ENCODE measurements at regions of chr3 and their contacts with region 1.

Region 1: GRCh38 chr3:134212906-134213665 is 37.6 kb downstream of the RYK start:
- DNase-seq: peak; percentile 54 to 88 (median 71)
- ATAC-seq: peak; percentile 93
- H3K4me3 ChIP-seq: no peak overlapping the region
- H3K4me3 Mint-ChIP-seq: peak overlapping the region in 1 of 10 donors; percentile 18
- H3K27ac ChIP-seq: no peak overlapping the region
- H3K27ac Mint-ChIP-seq: peak overlapping the region in 5 of 9 donors; percentile 12 to 60 (median 33)
- H3K4me1 ChIP-seq: no peaks in the 10 kb centered on the region
- H3K4me1 Mint-ChIP-seq: peaks cover 7 to 43% (median 30%) of the 10 kb centered on the region in 7 donors
- H3K27me3 ChIP-seq: no peaks in the 10 kb centered on the region
- H3K27me3 Mint-ChIP-seq: no peaks in the 10 kb centered on the region

Region 2: DNA sequence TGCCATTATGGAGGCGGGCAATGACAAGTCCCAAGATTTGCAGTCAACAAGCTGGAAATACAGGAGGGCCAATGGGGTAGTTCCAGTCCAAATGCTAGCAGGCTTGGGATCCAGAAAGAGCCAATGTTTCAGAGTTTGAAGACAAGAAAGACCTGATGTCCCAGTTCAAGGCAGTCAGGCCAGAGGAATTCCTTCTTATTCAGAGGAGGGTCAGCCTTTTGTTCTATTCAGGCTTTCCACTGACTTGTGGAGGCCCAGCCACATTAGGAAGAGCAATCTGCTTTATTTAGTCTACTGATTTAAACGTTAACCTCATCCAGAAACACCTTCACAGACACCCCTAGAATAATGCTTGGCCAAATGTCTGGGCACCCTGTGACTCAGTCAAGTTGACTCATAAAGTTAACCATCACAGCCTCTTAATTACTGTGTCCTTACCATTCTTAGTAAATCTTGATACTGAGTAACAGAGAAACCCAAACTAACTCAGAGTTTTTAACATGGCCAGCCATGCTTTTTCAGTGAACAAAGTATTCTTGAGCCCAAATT is 1439.9 kb before region 1 on chr3:
- CTCF ChIA-PET with region 1: no interaction called
- POLR2A ChIA-PET with region 1: no interaction called
- intact Hi-C with region 1: no loop called
- DNase-seq: no peak
- ATAC-seq: no peak
- H3K4me3 ChIP-seq: no peak overlapping the region
- H3K4me3 Mint-ChIP-seq: no peak overlapping the region
- H3K27ac ChIP-seq: no peak overlapping the region
- H3K27ac Mint-ChIP-seq: no peak overlapping the region
- H3K4me1 ChIP-seq: no peaks in the 10 kb centered on the region
- H3K4me1 Mint-ChIP-seq: no peaks in the 10 kb centered on the region
- H3K27me3 ChIP-seq: no peaks in the 10 kb centered on the region
- H3K27me3 Mint-ChIP-seq: peaks cover 4 to 15% (median 14%) of the 10 kb centered on the region in 5 donors

Region 3: DNA sequence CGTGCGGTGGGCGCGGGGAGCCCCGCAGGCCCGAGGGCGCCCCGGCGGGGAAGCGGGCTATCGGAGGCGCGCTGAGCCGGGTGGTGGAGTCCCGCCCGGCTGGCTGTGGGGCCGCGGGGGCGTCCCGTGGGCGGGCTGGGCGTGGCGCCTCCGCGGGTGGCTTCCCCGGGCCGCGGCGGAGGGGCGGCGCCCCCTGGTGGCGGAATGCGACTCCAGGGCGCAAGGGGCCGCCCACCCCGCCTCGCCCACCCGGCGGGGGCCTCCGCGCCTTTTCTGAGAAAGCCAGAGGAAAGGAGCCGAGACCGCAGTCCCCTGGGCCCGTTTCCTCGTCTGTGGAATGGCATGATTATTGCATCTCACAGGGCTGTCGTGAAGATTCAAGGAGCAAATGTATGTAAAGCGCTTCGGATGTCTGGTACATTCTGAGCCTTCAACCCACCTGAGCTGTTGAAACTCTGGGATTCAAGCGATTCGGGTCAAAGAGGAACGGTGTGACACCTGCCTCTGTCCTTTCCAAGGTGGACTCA is 285.5 kb before region 1 on chr3:
- CTCF ChIA-PET with region 1: no interaction called
- POLR2A ChIA-PET with region 1: no interaction called
- intact Hi-C with region 1: loop called in 1 of 2 experiments (anchors 5 kb)
- DNase-seq: peak; percentile 64 to 88 (median 81)
- ATAC-seq: peak; percentile 97
- H3K4me3 ChIP-seq: peak overlapping the region; percentile 51
- H3K4me3 Mint-ChIP-seq: peak overlapping the region; percentile 58 to 85 (median 74)
- H3K27ac ChIP-seq: peak overlapping the region; percentile 43
- H3K27ac Mint-ChIP-seq: peak overlapping the region in 2 of 9 donors; percentile 56 to 69
- H3K4me1 ChIP-seq: peaks cover 0 to 4% of the 10 kb centered on the region in 2 donors
- H3K4me1 Mint-ChIP-seq: peaks cover 4 to 14% (median 5%) of the 10 kb centered on the region in 7 donors
- H3K27me3 ChIP-seq: peaks cover 0 to 3% of the 10 kb centered on the region in 2 donors
- H3K27me3 Mint-ChIP-seq: peaks cover 5 to 26% (median 10%) of the 10 kb centered on the region in 5 donors

Region 4: GRCh38 chr3:134161898-134162615 is 51.0 kb before region 1 on chr3:
- CTCF ChIA-PET with region 1: no interaction called
- POLR2A ChIA-PET with region 1: no interaction called
- intact Hi-C with region 1: no loop called
- DNase-seq: no peak
- ATAC-seq: no peak
- H3K4me3 ChIP-seq: no peak overlapping the region
- H3K4me3 Mint-ChIP-seq: no peak overlapping the region
- H3K27ac ChIP-seq: no peak overlapping the region
- H3K27ac Mint-ChIP-seq: peak overlapping the region in 1 of 9 donors; percentile 50
- H3K4me1 ChIP-seq: no peaks in the 10 kb centered on the region
- H3K4me1 Mint-ChIP-seq: peaks cover 0 to 4% (median 0%) of the 10 kb centered on the region in 7 donors
- H3K27me3 ChIP-seq: no peaks in the 10 kb centered on the region
- H3K27me3 Mint-ChIP-seq: no peaks in the 10 kb centered on the region

Region 5: GRCh38 chr3:134299185-134299887 is 86.2 kb after region 1 on chr3:
- CTCF ChIA-PET with region 1: interaction called, 7 read pairs
- POLR2A ChIA-PET with region 1: no interaction called
- intact Hi-C with region 1: loop called (anchors 1 kb)
- DNase-seq: peak in 1 of 9 donors; percentile 12
- ATAC-seq: no peak
- H3K4me3 ChIP-seq: no peak overlapping the region
- H3K4me3 Mint-ChIP-seq: no peak overlapping the region
- H3K27ac ChIP-seq: no peak overlapping the region
- H3K27ac Mint-ChIP-seq: peak overlapping the region in 1 of 9 donors; percentile 14
- H3K4me1 ChIP-seq: peaks cover 8 to 9% of the 10 kb centered on the region in 2 donors
- H3K4me1 Mint-ChIP-seq: peaks cover 0 to 3% (median 0%) of the 10 kb centered on the region in 7 donors
- H3K27me3 ChIP-seq: no peaks in the 10 kb centered on the region
- H3K27me3 Mint-ChIP-seq: peaks cover 2 to 55% (median 14%) of the 10 kb centered on the region in 5 donors

Region 6: GRCh38 chr3:134373994-134374790 is 161.1 kb after region 1 on chr3 and contains the start of gene AMOTL2:
- CTCF ChIA-PET with region 1: interaction called, 8 read pairs
- POLR2A ChIA-PET with region 1: no interaction called
- intact Hi-C with region 1: loop called (anchors 1 kb)
- DNase-seq: peak in 1 of 9 donors; percentile 23
- ATAC-seq: peak; percentile 39
- H3K4me3 ChIP-seq: peak within 1 kb of the TSS; percentile 41
- H3K4me3 Mint-ChIP-seq: peak within 1 kb of the TSS; percentile 78 to 90 (median 84)
- H3K27ac ChIP-seq: no peak within 1 kb of the TSS
- H3K27ac Mint-ChIP-seq: no peak within 1 kb of the TSS
- H3K4me1 ChIP-seq: no peaks in the 10 kb centered on the region
- H3K4me1 Mint-ChIP-seq: peaks cover 7 to 13% (median 11%) of the 10 kb centered on the region in 7 donors
- H3K27me3 ChIP-seq: peaks cover 0 to 3% of the 10 kb centered on the region in 2 donors
- H3K27me3 Mint-ChIP-seq: peaks cover 22 to 63% (median 37%) of the 10 kb centered on the region in 5 donors
- total RNA-seq, gene AMOTL2: not detected